Calu3 (cell line): ENCODE measurements at regions of chr17 and their contacts with region 1.

Region 1: GRCh38 chr17:32536736-32537643 is 50.2 kb downstream of the CDK5R1 start:
- DNase-seq: no peak
- H3K4me3 Mint-ChIP-seq: no peak overlapping the region
- H3K27ac Mint-ChIP-seq: no peak overlapping the region
- H3K4me1 Mint-ChIP-seq: no peaks in the 10 kb centered on the region
- H3K27me3 Mint-ChIP-seq: no peaks in the 10 kb centered on the region
- CTCF ChIP-seq: no peak

Region 2: DNA sequence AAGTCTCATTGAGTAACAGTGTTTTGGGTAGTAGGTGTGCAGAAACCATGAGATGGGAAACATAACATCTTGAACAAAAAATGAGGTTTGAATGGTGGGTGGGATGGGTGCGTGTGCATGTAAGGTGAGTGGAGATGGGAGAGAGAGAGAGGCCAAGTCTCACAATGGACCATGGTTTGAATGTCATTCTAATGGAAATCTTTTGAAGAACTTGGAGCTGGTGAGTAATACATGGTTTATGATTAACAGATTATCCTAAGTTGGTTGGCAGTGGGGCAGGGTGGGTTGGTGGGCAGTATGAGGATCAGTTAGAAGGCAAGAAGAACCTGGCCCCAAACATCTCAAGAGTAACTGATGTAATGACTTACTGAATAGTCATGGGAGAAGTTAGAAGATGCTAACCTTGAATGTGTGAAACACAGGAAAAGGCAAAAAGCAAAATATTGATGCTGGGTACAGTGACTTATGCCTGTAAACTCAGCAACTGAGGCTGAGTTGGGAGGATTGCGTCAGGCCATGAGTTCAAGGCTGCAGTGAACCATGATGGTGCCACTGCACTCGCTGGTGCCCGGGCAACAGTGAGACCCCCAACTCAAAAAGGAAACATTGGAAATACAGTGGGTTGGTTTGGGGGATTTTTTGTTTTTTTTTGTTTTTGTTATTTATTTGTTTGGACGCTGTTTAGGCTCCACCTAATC is 154.3 kb before region 1 on chr17:
- CTCF ChIA-PET with region 1: no interaction called
- intact Hi-C with region 1: no loop called
- DNase-seq: no peak
- H3K4me3 Mint-ChIP-seq: no peak overlapping the region
- H3K27ac Mint-ChIP-seq: peak overlapping the region; percentile 13
- H3K4me1 Mint-ChIP-seq: peaks cover 48% of the 10 kb centered on the region
- H3K27me3 Mint-ChIP-seq: no peaks in the 10 kb centered on the region
- CTCF ChIP-seq: no peak

Region 3: GRCh38 chr17:32470405-32471167 is 66.4 kb before region 1 on chr17:
- CTCF ChIA-PET with region 1: no interaction called
- intact Hi-C with region 1: no loop called
- DNase-seq: no peak
- H3K4me3 Mint-ChIP-seq: no peak overlapping the region
- H3K27ac Mint-ChIP-seq: no peak overlapping the region
- H3K4me1 Mint-ChIP-seq: no peaks in the 10 kb centered on the region
- H3K27me3 Mint-ChIP-seq: no peaks in the 10 kb centered on the region
- CTCF ChIP-seq: no peak

Region 4: DNA sequence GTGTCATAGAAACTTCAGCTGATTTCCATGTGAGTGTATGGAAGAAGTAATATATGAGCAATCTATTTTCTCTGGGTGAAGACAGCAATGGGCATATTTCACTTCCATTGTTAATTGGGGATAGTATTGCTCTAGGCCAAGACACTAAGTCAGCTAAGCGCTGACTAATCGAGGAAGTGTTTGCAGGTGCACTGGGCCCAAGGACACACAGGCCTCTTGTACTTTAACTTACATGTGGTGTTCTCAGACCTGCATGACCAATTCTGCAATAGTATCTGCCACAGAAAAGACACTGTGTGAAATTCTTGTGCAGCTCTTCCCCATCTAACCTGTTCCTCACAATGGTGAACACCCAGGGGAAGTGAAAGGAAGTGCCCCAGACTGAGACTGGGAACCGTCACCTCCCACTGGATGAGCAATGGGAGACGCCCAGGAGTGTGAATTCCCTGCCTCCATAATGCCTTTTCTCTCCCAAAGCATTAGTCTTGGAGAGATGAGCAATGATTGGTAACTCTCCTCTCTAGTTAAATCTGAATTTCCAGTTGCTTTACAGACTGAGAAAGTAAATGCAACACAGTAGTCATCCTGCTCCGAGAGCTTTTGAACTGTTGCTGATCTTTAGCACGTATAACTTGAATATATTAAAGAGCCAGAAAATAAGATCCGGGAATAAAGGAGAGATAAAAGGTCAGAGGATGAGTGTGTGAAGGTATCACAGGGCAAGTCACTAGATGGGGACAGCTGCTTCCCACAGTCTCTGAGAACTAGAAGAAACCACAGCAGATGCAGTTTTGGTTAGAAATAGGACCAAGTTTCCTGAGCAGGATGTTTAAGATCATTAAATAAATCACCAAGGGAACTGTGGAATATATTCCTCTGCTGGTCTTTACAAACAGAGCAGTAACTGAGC is 32.4 kb after region 1 on chr17:
- CTCF ChIA-PET with region 1: no interaction called
- intact Hi-C with region 1: no loop called
- DNase-seq: no peak
- H3K4me3 Mint-ChIP-seq: no peak overlapping the region
- H3K27ac Mint-ChIP-seq: no peak overlapping the region
- H3K4me1 Mint-ChIP-seq: no peaks in the 10 kb centered on the region
- H3K27me3 Mint-ChIP-seq: no peaks in the 10 kb centered on the region
- CTCF ChIP-seq: no peak

Region 5: DNA sequence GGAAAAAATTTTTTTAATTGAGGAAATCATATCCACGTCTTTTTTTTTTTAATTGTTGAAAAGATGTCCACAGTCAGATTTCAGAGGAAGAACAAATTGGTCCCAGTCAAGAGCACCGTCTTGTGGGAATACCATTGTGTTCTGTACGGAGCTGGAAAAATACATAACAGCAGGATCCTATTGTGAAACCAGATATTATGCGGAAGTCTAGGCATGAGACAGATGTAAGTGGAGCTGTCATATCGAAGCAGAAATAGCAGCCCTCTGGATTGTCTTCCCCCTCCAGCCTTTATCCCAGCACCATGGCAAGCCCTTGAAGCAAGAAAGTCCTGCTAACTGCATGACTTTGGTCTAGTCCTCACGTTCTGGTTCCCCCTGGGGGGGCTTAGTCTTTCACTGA is 1147.7 kb after region 1 on chr17:
- CTCF ChIA-PET with region 1: interaction called, 10 read pairs
- intact Hi-C with region 1: no loop called
- DNase-seq: no peak
- H3K4me3 Mint-ChIP-seq: no peak overlapping the region
- H3K27ac Mint-ChIP-seq: no peak overlapping the region
- H3K4me1 Mint-ChIP-seq: no peaks in the 10 kb centered on the region
- H3K27me3 Mint-ChIP-seq: peaks cover 20% of the 10 kb centered on the region
- CTCF ChIP-seq: no peak